B cell (primary cell): ENCODE measurements at regions of chr14 and their contacts with region 1.

Region 1: GRCh38 chr14:95534299-95535225 is at the start of gene GLRX5:
- DNase-seq: peak; percentile 100
- ATAC-seq: peak; percentile 84
- H3K4me3 ChIP-seq: peak within 1 kb of the TSS; percentile 54 to 90 (median 79)
- H3K4me3 Mint-ChIP-seq: peak within 1 kb of the TSS; percentile 93
- H3K27ac ChIP-seq: peak within 1 kb of the TSS; percentile 72 to 93
- H3K27ac Mint-ChIP-seq: peak within 1 kb of the TSS; percentile 93
- H3K4me1 ChIP-seq: peaks cover 23 to 36% of the 10 kb centered on the region in 2 donors
- H3K4me1 Mint-ChIP-seq: peaks cover 55% of the 10 kb centered on the region
- H3K27me3 ChIP-seq: no peaks in the 10 kb centered on the region
- H3K27me3 Mint-ChIP-seq: no peaks in the 10 kb centered on the region
- CTCF ChIP-seq: no peak
- total RNA-seq, gene GLRX5: 17.0 and 18.4 TPM in 2 replicates

Region 2: DNA sequence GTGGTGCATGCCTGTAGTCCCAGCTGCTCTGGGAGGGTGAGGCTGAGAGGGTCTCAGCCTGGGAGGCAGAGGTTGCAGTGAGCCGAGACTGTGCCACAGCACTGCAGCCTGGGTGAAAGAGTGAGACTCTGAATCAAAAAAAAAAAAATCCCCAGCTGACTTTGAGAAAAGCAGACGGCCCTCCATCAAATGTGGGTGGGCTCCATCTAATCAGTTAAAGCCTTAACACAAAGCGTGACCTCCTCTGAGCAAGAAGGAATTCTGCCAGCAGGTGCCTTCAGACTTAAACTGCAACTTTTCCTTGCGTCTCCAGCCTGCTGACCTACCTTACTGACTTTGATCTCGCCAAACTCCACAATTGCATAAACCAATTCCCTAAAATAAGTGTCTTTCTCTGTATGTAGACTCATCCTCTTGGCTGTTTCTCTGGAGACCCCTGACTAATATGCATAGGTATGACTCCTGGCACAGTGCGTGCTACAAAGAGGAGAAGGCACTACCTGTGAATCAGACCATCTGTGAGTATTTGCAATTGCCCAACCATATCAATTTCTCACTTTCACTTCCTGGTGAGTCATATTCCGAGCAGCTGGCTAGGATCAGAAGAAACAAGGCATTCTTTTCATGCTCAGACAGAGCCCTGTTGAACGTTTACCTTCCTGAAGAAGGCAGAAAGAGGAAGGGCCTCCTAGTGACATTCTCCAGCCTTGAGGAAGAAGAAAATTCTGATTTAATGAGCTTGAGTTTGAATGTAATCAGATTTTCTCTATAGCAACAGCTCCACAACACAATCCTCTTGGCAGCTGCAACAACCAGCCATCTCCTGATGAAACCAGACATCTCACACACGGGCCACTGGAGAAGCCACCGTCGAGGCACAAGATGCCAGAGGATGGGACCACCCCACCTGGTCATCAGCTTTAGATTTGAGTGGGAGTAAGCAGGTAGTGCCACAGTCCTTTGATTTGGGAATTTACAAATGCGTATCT is 269.2 kb before region 1 on chr14:
- CTCF ChIA-PET with region 1: no interaction called
- POLR2A ChIA-PET with region 1: no interaction called
- intact Hi-C with region 1: loop called (anchors 10 kb)
- DNase-seq: peak; percentile 82
- ATAC-seq: peak; percentile 94
- H3K4me3 ChIP-seq: peak overlapping the region in 1 of 5 experiments; percentile 19
- H3K4me3 Mint-ChIP-seq: peak overlapping the region; percentile 67
- H3K27ac ChIP-seq: peak overlapping the region; percentile 32 to 57
- H3K27ac Mint-ChIP-seq: peak overlapping the region; percentile 79
- H3K4me1 ChIP-seq: peaks cover 21 to 27% of the 10 kb centered on the region in 2 donors
- H3K4me1 Mint-ChIP-seq: peaks cover 44% of the 10 kb centered on the region
- H3K27me3 ChIP-seq: no peaks in the 10 kb centered on the region
- H3K27me3 Mint-ChIP-seq: no peaks in the 10 kb centered on the region
- CTCF ChIP-seq: no peak

Region 3: DNA sequence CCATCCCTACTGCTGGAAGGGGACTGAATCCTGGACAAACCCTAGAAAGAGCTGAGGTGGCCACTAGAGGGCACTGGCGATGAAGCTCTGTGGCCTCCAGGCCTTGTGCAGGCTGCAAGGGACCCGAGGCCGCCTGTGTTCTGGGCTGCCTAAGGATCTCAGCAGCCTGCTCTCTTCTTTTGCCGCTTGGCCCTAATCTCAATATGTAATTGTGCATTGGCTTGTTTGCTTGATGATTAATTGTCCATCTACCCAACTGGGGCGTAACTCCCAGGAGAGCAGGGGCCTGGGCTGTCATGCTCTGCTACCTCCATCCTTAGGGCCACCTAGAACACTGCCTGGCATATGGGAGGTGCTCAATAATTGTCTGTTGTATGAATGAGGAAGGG is 91.9 kb before region 1 on chr14:
- CTCF ChIA-PET with region 1: interaction called, 204 read pairs
- POLR2A ChIA-PET with region 1: no interaction called
- intact Hi-C with region 1: no loop called
- DNase-seq: peak; percentile 83
- ATAC-seq: peak; percentile 91
- H3K4me3 ChIP-seq: no peak overlapping the region
- H3K4me3 Mint-ChIP-seq: peak overlapping the region; percentile 0
- H3K27ac ChIP-seq: peak overlapping the region in 1 of 2 donors; percentile 55
- H3K27ac Mint-ChIP-seq: peak overlapping the region; percentile 73
- H3K4me1 ChIP-seq: peaks cover 28 to 37% of the 10 kb centered on the region in 2 donors
- H3K4me1 Mint-ChIP-seq: peaks cover 27% of the 10 kb centered on the region
- H3K27me3 ChIP-seq: no peaks in the 10 kb centered on the region
- H3K27me3 Mint-ChIP-seq: no peaks in the 10 kb centered on the region
- CTCF ChIP-seq: peak; percentile 88

Region 4: GRCh38 chr14:95488376-95489213 is 46.0 kb before region 1 on chr14:
- CTCF ChIA-PET with region 1: no interaction called
- POLR2A ChIA-PET with region 1: no interaction called
- intact Hi-C with region 1: no loop called
- DNase-seq: no peak
- ATAC-seq: no peak
- H3K4me3 ChIP-seq: no peak overlapping the region
- H3K4me3 Mint-ChIP-seq: peak overlapping the region; percentile 26
- H3K27ac ChIP-seq: peak overlapping the region in 1 of 2 donors; percentile 9
- H3K27ac Mint-ChIP-seq: peak overlapping the region; percentile 86
- H3K4me1 ChIP-seq: peaks cover 70 to 79% of the 10 kb centered on the region in 2 donors
- H3K4me1 Mint-ChIP-seq: peaks cover 86% of the 10 kb centered on the region
- H3K27me3 ChIP-seq: no peaks in the 10 kb centered on the region
- H3K27me3 Mint-ChIP-seq: no peaks in the 10 kb centered on the region
- CTCF ChIP-seq: no peak

Region 5: DNA sequence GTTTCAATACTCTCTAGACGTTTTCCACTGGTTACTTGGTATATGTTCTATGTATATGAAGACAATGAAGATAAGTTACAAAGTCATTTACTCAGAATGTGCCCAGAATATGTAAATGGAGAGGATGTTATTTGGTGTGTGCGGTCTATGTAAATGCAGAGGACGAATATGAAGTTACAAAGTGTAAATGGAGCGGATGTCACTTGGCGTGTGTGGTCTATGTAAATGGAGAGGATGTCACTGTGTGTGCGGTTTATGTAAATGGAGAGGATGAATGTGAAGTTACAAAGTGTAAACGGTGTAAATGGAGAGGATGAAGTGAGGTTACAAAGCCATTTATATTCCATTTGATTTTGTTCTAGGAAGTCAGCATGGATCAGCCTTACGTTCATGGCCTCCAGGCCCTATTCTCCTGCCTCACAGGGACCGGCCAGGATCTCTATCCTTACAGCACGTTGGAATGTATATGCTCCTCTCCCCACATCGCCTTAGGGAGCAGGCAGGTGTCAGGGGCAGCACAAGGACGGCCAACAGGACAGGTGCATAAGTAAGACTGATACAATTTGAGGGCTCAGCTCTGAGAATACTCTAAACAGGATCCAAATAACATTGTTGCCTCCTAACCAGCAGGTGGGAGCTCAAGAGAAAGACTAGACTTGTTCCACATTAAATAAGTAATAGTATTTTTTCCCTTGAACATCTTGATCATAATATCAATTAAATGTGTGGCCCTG is 42.7 kb after region 1 on chr14:
- CTCF ChIA-PET with region 1: no interaction called
- POLR2A ChIA-PET with region 1: no interaction called
- intact Hi-C with region 1: loop called (anchors 1 kb)
- DNase-seq: peak; percentile 80
- ATAC-seq: peak; percentile 93
- H3K4me3 ChIP-seq: no peak overlapping the region
- H3K4me3 Mint-ChIP-seq: peak overlapping the region; percentile 28
- H3K27ac ChIP-seq: no peak overlapping the region
- H3K27ac Mint-ChIP-seq: no peak overlapping the region
- H3K4me1 ChIP-seq: peaks cover 25 to 27% of the 10 kb centered on the region in 2 donors
- H3K4me1 Mint-ChIP-seq: peaks cover 24% of the 10 kb centered on the region
- H3K27me3 ChIP-seq: peaks cover 0 to 56% (median 35%) of the 10 kb centered on the region in 4 experiments
- H3K27me3 Mint-ChIP-seq: peaks cover 53% of the 10 kb centered on the region
- CTCF ChIP-seq: no peak

Region 6: GRCh38 chr14:96796851-96797581 is 1262.5 kb after region 1 on chr14 and contains the start of gene VRK1:
- CTCF ChIA-PET with region 1: no interaction called
- POLR2A ChIA-PET with region 1: no interaction called
- intact Hi-C with region 1: loop called (anchors 10 kb)
- DNase-seq: peak; percentile 95
- ATAC-seq: peak; percentile 99
- H3K4me3 ChIP-seq: peak within 1 kb of the TSS; percentile 62 to 95 (median 80)
- H3K4me3 Mint-ChIP-seq: peak within 1 kb of the TSS; percentile 90
- H3K27ac ChIP-seq: peak within 1 kb of the TSS; percentile 80 to 82
- H3K27ac Mint-ChIP-seq: peak within 1 kb of the TSS; percentile 91
- H3K4me1 ChIP-seq: peaks cover 11% of the 10 kb centered on the region in 2 donors
- H3K4me1 Mint-ChIP-seq: peaks cover 20% of the 10 kb centered on the region
- H3K27me3 ChIP-seq: peaks cover 0 to 9% (median 2%) of the 10 kb centered on the region in 4 experiments
- H3K27me3 Mint-ChIP-seq: peaks cover 11% of the 10 kb centered on the region
- CTCF ChIP-seq: no peak
- total RNA-seq, gene VRK1: 28.2 and 35.3 TPM in 2 replicates